Activated CD8-positive, alpha-beta T cell treated with anti-CD3 and anti-CD28 coated beads, Interleukin-2, amount 10 ng/mL, durations not matched to agents 7 days and 5 days (primary cell): ENCODE measurements at regions of chr11 and their contacts with region 1.

Region 1: DNA sequence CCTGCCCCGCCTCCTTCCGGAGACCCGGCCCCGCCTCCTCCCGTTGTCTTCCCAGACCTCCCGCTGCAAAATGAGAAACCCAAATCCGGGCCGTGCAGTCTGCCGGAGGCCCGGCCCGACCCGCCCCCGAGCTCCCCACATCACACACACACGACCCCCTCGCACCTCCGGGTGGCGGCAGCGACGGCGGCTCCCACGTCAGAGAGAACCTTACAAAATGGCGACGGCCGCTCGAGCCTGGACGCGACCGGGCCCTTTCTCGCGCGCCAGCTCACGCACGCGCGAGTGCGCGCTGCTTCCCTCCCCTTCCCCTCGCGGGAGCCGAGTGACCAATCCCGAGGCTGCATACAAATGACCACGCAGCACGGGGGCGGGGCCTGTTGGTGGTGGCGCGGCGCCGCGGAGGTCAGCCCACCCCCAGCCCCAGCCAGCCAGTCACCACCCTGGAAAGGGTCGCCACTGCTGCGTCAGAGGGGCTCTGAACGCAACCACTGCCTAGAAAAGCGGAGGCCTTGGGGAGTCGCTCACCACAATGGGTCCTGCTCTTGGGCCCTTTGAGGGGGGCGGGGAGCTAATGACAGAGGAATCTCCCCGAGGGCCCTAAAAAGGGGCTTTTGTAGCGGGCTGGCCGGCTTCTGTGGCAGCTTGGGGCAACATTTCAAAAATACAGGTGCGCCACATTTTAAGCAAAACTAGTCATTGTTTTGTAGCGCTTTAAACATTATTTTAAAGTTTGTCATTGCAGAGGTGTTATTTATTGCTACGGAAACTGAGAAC is at the start of gene RBM4B:
- DNase-seq: peak; percentile 96
- ATAC-seq: peak; percentile 89
- H3K4me3 Mint-ChIP-seq: peak within 1 kb of the TSS; percentile 95
- H3K27ac Mint-ChIP-seq: peak within 1 kb of the TSS; percentile 99
- H3K4me1 Mint-ChIP-seq: peaks cover 35% of the 10 kb centered on the region
- H3K27me3 Mint-ChIP-seq: no peaks in the 10 kb centered on the region
- total RNA-seq, gene RBM4B: 18.7 to 21.5 TPM

Region 2: GRCh38 chr11:66408488-66409214 is 269.1 kb before region 1 on chr11:
- CTCF ChIA-PET with region 1: interaction called, 49 read pairs
- POLR2A ChIA-PET with region 1: no interaction called
- DNase-seq: peak; percentile 93
- ATAC-seq: peak; percentile 88
- H3K4me3 Mint-ChIP-seq: peak overlapping the region; percentile 73
- H3K27ac Mint-ChIP-seq: peak overlapping the region; percentile 74
- H3K4me1 Mint-ChIP-seq: peaks cover 6% of the 10 kb centered on the region
- H3K27me3 Mint-ChIP-seq: peaks cover 13% of the 10 kb centered on the region

Region 3: GRCh38 chr11:66480117-66480938 is 197.5 kb before region 1 on chr11 and contains the start of gene DPP3:
- CTCF ChIA-PET with region 1: interaction called, 15 read pairs
- POLR2A ChIA-PET with region 1: interaction called, 8 read pairs
- DNase-seq: peak; percentile 98
- ATAC-seq: peak; percentile 98
- H3K4me3 Mint-ChIP-seq: peak within 1 kb of the TSS; percentile 92
- H3K27ac Mint-ChIP-seq: peak within 1 kb of the TSS; percentile 91
- H3K4me1 Mint-ChIP-seq: peaks cover 31% of the 10 kb centered on the region
- H3K27me3 Mint-ChIP-seq: no peaks in the 10 kb centered on the region
- total RNA-seq, gene DPP3: 73.3 to 79.1 TPM

Region 4: DNA sequence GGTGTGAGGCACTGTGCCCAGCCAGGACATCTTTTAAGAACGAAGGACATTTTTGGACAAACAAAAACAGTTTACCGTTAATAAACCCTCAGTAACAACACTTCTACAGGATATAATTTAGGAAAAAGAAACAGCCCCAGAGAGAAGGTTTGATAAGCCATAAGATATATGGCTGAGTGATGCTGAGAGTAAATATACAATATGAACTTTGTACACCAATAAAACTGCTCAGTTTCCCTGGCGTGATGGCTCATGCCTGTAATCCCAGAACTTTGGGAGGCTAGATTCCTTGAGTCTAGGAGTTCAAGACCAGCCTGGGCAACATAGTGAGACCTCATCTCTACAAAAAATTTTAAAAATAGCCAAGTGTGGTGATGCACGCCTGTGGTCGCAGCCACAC is 179.3 kb before region 1 on chr11:
- CTCF ChIA-PET with region 1: no interaction called
- POLR2A ChIA-PET with region 1: no interaction called
- DNase-seq: no peak
- ATAC-seq: no peak
- H3K4me3 Mint-ChIP-seq: no peak overlapping the region
- H3K27ac Mint-ChIP-seq: no peak overlapping the region
- H3K4me1 Mint-ChIP-seq: no peaks in the 10 kb centered on the region
- H3K27me3 Mint-ChIP-seq: no peaks in the 10 kb centered on the region

Region 5: DNA sequence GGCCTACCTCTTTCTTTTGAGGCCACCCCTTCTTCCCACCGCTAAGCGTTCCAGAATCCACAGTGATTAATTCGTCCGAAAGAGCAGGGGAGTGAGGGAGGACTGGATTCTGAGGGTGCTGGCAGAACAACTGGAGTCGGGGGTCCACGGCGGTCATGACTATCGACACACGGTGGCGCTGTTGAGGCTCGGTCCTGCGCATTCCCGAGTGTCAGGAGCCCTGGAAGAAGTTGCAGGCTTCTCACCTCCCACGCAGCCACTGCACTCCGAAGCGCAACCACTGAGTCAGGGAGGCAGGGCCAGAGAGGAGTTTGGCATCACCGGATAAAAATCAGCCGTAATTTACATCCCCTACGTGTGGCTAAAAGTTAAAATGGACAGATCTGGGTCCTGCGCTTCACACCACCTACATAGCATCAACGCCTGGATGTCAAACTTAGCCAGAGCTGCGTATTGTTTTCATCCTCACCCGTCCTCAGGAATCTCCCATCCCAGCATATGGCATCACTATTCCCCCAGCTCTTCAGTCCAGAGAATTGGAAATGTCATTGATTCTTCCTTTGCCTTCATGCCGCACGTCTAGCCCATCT is 98.7 kb before region 1 on chr11:
- CTCF ChIA-PET with region 1: interaction called, 70 read pairs
- POLR2A ChIA-PET with region 1: interaction called, 8 read pairs
- DNase-seq: peak; percentile 75
- ATAC-seq: peak; percentile 90
- H3K4me3 Mint-ChIP-seq: no peak overlapping the region
- H3K27ac Mint-ChIP-seq: no peak overlapping the region
- H3K4me1 Mint-ChIP-seq: peaks cover 6% of the 10 kb centered on the region
- H3K27me3 Mint-ChIP-seq: peaks cover 12% of the 10 kb centered on the region

Region 6: DNA sequence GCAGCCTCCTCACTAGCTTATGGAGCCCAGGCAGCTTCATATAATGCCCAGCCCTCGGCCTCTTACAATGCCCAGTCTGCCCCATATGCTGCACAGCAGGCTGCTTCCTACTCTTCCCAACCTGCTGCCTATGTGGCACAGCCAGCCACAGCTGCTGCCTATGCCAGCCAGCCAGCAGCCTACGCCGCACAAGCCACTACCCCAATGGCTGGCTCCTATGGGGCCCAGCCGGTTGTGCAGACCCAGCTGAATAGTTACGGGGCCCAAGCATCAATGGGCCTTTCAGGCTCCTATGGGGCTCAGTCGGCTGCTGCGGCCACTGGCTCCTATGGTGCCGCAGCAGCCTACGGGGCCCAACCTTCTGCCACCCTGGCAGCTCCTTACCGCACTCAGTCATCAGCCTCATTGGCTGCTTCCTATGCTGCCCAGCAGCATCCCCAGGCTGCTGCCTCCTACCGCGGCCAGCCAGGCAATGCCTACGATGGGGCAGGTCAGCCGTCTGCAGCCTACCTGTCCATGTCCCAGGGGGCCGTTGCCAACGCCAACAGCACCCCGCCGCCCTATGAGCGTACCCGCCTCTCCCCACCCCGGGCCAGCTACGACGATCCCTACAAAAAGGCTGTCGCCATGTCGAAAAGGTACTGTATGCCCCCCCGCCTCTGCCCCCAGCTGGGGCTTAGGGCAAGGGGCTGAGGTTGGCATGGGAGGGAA is 52.6 kb before region 1 on chr11:
- CTCF ChIA-PET with region 1: interaction called, 16 read pairs
- POLR2A ChIA-PET with region 1: interaction called, 6 read pairs
- DNase-seq: no peak
- ATAC-seq: no peak
- H3K4me3 Mint-ChIP-seq: no peak overlapping the region
- H3K27ac Mint-ChIP-seq: no peak overlapping the region
- H3K4me1 Mint-ChIP-seq: peaks cover 47% of the 10 kb centered on the region
- H3K27me3 Mint-ChIP-seq: no peaks in the 10 kb centered on the region

Region 7: DNA sequence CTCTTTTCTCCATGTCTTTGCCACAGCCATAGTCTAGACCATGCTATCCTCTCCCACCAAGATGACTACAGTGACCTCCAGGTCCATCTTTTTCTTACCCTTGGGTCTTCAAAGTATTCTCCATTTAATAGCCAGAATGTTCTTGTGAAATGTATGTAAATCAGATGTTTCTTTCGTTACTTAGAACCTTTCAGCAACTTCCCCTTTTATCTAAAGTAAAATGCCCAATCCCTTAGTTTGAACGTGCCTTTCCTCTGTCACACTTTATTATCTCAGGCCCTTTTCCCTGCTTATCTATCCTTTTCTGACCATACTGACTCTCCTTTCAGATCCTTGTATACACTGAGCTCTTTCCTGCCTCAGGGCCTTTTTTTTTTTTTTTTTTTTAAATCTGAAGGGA is 18.0 kb before region 1 on chr11:
- CTCF ChIA-PET with region 1: interaction called, 19 read pairs
- POLR2A ChIA-PET with region 1: interaction called, 3 read pairs
- DNase-seq: no peak
- ATAC-seq: no peak
- H3K4me3 Mint-ChIP-seq: no peak overlapping the region
- H3K27ac Mint-ChIP-seq: peak overlapping the region; percentile 28
- H3K4me1 Mint-ChIP-seq: peaks cover 5% of the 10 kb centered on the region
- H3K27me3 Mint-ChIP-seq: no peaks in the 10 kb centered on the region

Region 8: GRCh38 chr11:66850588-66851238 is 172.9 kb after region 1 on chr11:
- CTCF ChIA-PET with region 1: no interaction called
- POLR2A ChIA-PET with region 1: no interaction called
- DNase-seq: no peak
- ATAC-seq: no peak
- H3K4me3 Mint-ChIP-seq: no peak overlapping the region
- H3K27ac Mint-ChIP-seq: no peak overlapping the region
- H3K4me1 Mint-ChIP-seq: peaks cover 40% of the 10 kb centered on the region
- H3K27me3 Mint-ChIP-seq: no peaks in the 10 kb centered on the region

Region 9: DNA sequence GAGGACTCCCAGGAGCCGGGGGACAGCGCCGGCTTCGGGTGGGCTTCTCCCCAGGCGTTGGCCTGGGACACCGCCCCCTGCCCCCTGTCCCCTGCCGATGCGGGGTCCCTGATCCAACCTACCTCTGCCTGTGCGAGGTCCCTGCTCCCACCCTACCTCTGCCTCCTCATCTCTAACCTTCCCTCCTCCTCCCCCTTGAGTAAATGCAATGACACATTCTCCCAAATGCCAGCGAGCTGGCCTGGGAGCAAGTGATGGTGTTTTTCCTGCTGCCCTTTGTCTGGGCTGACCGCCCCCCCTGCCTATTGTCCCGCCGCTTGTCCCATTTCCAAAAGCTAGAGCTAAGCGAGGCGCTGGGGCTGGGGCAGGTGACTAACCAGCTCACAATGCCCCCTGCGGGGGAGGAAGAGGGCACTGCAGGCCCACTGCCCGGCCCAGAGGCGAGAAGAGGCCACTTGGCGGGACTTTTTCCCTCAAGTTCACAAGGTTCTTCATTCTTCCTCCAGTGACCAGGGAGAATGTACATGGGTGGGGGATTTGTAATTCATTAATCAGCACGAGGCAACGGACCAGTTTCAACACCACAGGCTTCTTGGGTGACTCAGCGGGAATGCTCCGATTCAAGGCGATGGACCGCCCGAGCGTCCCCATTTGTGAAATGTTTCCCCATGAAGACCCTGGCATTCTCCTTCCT is 696.3 kb after region 1 on chr11:
- CTCF ChIA-PET with region 1: no interaction called
- POLR2A ChIA-PET with region 1: no interaction called
- DNase-seq: peak; percentile 63
- ATAC-seq: peak; percentile 48
- H3K4me3 Mint-ChIP-seq: peak overlapping the region; percentile 72
- H3K27ac Mint-ChIP-seq: peak overlapping the region; percentile 42
- H3K4me1 Mint-ChIP-seq: peaks cover 52% of the 10 kb centered on the region
- H3K27me3 Mint-ChIP-seq: peaks cover 53% of the 10 kb centered on the region